ENCODE measurements at regions of chr9 and their contacts with region 1.

Region 1: GRCh38 chr9:20884985-20885593 is 146.4 kb downstream of the HACD4 start:
- DNase-seq: peak; percentile 78
- ATAC-seq: peak; percentile 58
- H3K4me3 Mint-ChIP-seq: no peak overlapping the region
- H3K27ac Mint-ChIP-seq: no peak overlapping the region
- H3K4me1 Mint-ChIP-seq: no peaks in the 10 kb centered on the region
- H3K27me3 Mint-ChIP-seq: no peaks in the 10 kb centered on the region

Region 2: GRCh38 chr9:20870115-20870514 is 15.0 kb before region 1 on chr9:
- CTCF ChIA-PET with region 1: interaction called, 12 read pairs
- POLR2A ChIA-PET with region 1: no interaction called
- intact Hi-C with region 1: no loop called
- DNase-seq: no peak
- ATAC-seq: no peak
- H3K4me3 Mint-ChIP-seq: no peak overlapping the region
- H3K27ac Mint-ChIP-seq: no peak overlapping the region
- H3K4me1 Mint-ChIP-seq: peaks cover 11% of the 10 kb centered on the region
- H3K27me3 Mint-ChIP-seq: no peaks in the 10 kb centered on the region

Region 3: GRCh38 chr9:20898885-20899554 is 13.9 kb after region 1 on chr9:
- CTCF ChIA-PET with region 1: interaction called, 12 read pairs
- POLR2A ChIA-PET with region 1: no interaction called
- intact Hi-C with region 1: no loop called
- DNase-seq: peak; percentile 22
- ATAC-seq: peak; percentile 44
- H3K4me3 Mint-ChIP-seq: no peak overlapping the region
- H3K27ac Mint-ChIP-seq: no peak overlapping the region
- H3K4me1 Mint-ChIP-seq: no peaks in the 10 kb centered on the region
- H3K27me3 Mint-ChIP-seq: no peaks in the 10 kb centered on the region

Region 4: GRCh38 chr9:20941174-20941690 is 56.1 kb after region 1 on chr9:
- CTCF ChIA-PET with region 1: interaction called, 17 read pairs
- POLR2A ChIA-PET with region 1: no interaction called
- intact Hi-C with region 1: loop called (anchors 1 to 5 kb)
- DNase-seq: peak; percentile 68
- ATAC-seq: peak; percentile 98
- H3K4me3 Mint-ChIP-seq: no peak overlapping the region
- H3K27ac Mint-ChIP-seq: no peak overlapping the region
- H3K4me1 Mint-ChIP-seq: peaks cover 3% of the 10 kb centered on the region
- H3K27me3 Mint-ChIP-seq: no peaks in the 10 kb centered on the region

Region 5: DNA sequence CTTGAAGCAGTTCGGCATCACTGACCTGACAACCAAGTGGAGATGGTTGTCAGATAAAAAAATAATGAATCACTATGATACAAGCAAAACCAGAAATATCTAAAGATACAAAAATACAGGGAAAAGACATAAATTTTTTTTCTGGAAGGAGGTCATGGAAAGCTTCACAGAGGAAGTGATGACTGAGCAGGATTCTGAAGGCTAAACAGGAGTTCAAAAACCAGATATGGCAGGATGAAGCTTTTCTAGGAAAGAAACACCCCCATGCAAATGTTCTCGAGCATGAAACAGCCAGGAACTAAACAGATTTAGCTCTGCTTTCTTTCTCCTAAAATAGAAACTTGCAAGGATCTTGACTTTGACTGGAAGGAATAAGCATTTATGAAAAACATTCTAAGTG is 657.7 kb after region 1 on chr9:
- CTCF ChIA-PET with region 1: no interaction called
- POLR2A ChIA-PET with region 1: no interaction called
- intact Hi-C with region 1: no loop called
- DNase-seq: no peak
- ATAC-seq: no peak
- H3K4me3 Mint-ChIP-seq: no peak overlapping the region
- H3K27ac Mint-ChIP-seq: no peak overlapping the region
- H3K4me1 Mint-ChIP-seq: peaks cover 2% of the 10 kb centered on the region
- H3K27me3 Mint-ChIP-seq: no peaks in the 10 kb centered on the region

Measured in activated CD4-positive, alpha-beta T cell treated with anti-CD3 and anti-CD28 coated beads for 36 hours (primary cell).